Activated T-helper 1 cell treated with anti-CD3 and anti-CD28 coated beads, Interleukin-12 subunit alpha, Interleukin-12 subunit beta, Interleukin-2, Interleukin-4 antibody, amounts not matched to agents 30 ng/mL and 10 ng/mL and 1 ng/mL, durations not matched to agents 14 hours and 24 hours and 36 hours (primary cell): ENCODE measurements at regions of chr7 and their contacts with region 1.

Region 1: GRCh38 chr7:150567169-150567568 is at the start of gene GIMAP4:
- DNase-seq: no peak
- H3K4me3 Mint-ChIP-seq: peak within 1 kb of the TSS; percentile 96
- H3K27ac Mint-ChIP-seq: peak within 1 kb of the TSS; percentile 99
- H3K4me1 Mint-ChIP-seq: peaks cover 93% of the 10 kb centered on the region
- H3K27me3 Mint-ChIP-seq: no peaks in the 10 kb centered on the region
- total RNA-seq, gene GIMAP4: 84.2 and 87.4 TPM in 2 replicates

Region 2: GRCh38 chr7:150514748-150515222 is 52.4 kb before region 1 on chr7 and contains the start of gene GIMAP7:
- intact Hi-C with region 1: loop called (anchors 2 kb)
- DNase-seq: peak; percentile 68
- H3K4me3 Mint-ChIP-seq: peak within 1 kb of the TSS; percentile 96
- H3K27ac Mint-ChIP-seq: peak within 1 kb of the TSS; percentile 98
- H3K4me1 Mint-ChIP-seq: peaks cover 65% of the 10 kb centered on the region
- H3K27me3 Mint-ChIP-seq: no peaks in the 10 kb centered on the region
- total RNA-seq, gene GIMAP7: 46.9 and 55.1 TPM in 2 replicates

Region 3: GRCh38 chr7:150538259-150538658 is 28.9 kb before region 1 on chr7:
- intact Hi-C with region 1: no loop called
- DNase-seq: no peak
- H3K4me3 Mint-ChIP-seq: no peak overlapping the region
- H3K27ac Mint-ChIP-seq: no peak overlapping the region
- H3K4me1 Mint-ChIP-seq: peaks cover 5% of the 10 kb centered on the region
- H3K27me3 Mint-ChIP-seq: no peaks in the 10 kb centered on the region

Region 4: DNA sequence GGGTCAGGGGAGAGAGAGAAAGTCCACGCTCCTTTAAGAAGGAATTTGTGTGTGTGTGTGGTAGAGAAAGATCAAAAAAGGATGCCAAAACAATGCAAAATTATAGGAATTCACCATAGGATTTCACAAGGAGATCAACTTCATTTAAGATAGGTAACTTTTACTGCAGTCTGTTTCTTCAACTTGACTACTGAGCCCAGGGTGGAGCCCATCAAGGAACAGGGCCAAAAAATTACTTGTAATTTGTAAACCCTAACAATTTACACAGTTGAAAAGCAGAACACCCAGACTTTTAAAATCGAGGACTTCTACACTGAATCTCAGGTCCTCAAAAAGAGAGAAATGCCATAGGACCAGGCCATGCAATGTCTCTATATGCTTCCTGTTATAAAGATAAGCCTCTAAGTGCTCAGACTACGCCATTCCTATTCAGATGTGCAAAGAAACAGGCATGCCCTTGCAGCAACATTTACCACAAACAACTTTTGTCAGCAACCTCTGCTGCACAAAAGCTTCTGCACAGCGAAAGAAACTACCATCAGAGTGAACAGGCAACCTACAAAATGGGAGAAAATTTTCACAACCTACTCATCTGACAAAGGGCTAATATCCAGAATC is 10.5 kb before region 1 on chr7:
- intact Hi-C with region 1: loop called (anchors 1 kb)
- DNase-seq: peak; percentile 48
- H3K4me3 Mint-ChIP-seq: peak overlapping the region; percentile 64
- H3K27ac Mint-ChIP-seq: peak overlapping the region; percentile 90
- H3K4me1 Mint-ChIP-seq: peaks cover 82% of the 10 kb centered on the region
- H3K27me3 Mint-ChIP-seq: no peaks in the 10 kb centered on the region

Region 5: GRCh38 chr7:150631866-150632864 is 65.0 kb after region 1 on chr7 and contains the start of gene GIMAP6:
- intact Hi-C with region 1: loop called (anchors 1 kb)
- DNase-seq: peak; percentile 48
- H3K4me3 Mint-ChIP-seq: peak within 1 kb of the TSS; percentile 94
- H3K27ac Mint-ChIP-seq: peak within 1 kb of the TSS; percentile 94
- H3K4me1 Mint-ChIP-seq: peaks cover 68% of the 10 kb centered on the region
- H3K27me3 Mint-ChIP-seq: no peaks in the 10 kb centered on the region
- total RNA-seq, gene GIMAP6: 38.7 and 41.3 TPM in 2 replicates

Region 6: GRCh38 chr7:150716368-150716767 is 149.2 kb after region 1 on chr7 and contains the start of gene GIMAP1:
- intact Hi-C with region 1: loop called (anchors 1 kb)
- DNase-seq: peak; percentile 58
- H3K4me3 Mint-ChIP-seq: peak within 1 kb of the TSS; percentile 97
- H3K27ac Mint-ChIP-seq: peak within 1 kb of the TSS; percentile 75
- H3K4me1 Mint-ChIP-seq: peaks cover 64% of the 10 kb centered on the region
- H3K27me3 Mint-ChIP-seq: no peaks in the 10 kb centered on the region
- total RNA-seq, gene GIMAP1: 4.6 and 4.9 TPM in 2 replicates